Upper lobe of right lung (tissue), 1 donor: ENCODE measurements at regions of chr1 and their contacts with region 1.

Region 1: GRCh38 chr1:23496490-23497181 is 12.7 kb upstream of the ASAP3 start:
- DNase-seq: no peak
- ATAC-seq: peak; percentile 5
- H3K4me3 ChIP-seq: no peak overlapping the region
- H3K27ac ChIP-seq: no peak overlapping the region
- H3K4me1 ChIP-seq: peaks cover 6% of the 10 kb centered on the region
- H3K27me3 ChIP-seq: no peaks in the 10 kb centered on the region
- CTCF ChIP-seq: no peak

Region 2: GRCh38 chr1:23539698-23540266 is 43.1 kb after region 1 on chr1:
- intact Hi-C with region 1: loop called (anchors 5 kb)
- DNase-seq: peak; percentile 90
- ATAC-seq: peak; percentile 97
- H3K4me3 ChIP-seq: peak overlapping the region; percentile 9
- H3K27ac ChIP-seq: no peak overlapping the region
- H3K4me1 ChIP-seq: peaks cover 8% of the 10 kb centered on the region
- H3K27me3 ChIP-seq: no peaks in the 10 kb centered on the region
- CTCF ChIP-seq: peak; percentile 94

Region 3: GRCh38 chr1:23643736-23644554 is 147.3 kb after region 1 on chr1:
- intact Hi-C with region 1: no loop called
- DNase-seq: no peak
- ATAC-seq: no peak
- H3K4me3 ChIP-seq: no peak overlapping the region
- H3K27ac ChIP-seq: no peak overlapping the region
- H3K4me1 ChIP-seq: no peaks in the 10 kb centered on the region
- H3K27me3 ChIP-seq: no peaks in the 10 kb centered on the region
- CTCF ChIP-seq: no peak